ENCODE measurements at regions of chr9 and their contacts with region 1.

Region 1: GRCh38 chr9:114906908-114907571 is 23.4 kb downstream of the TNFSF8 start:
- DNase-seq: peak; percentile 49 to 78
- ATAC-seq: peak; percentile 57 to 78
- H3K4me3 ChIP-seq: no peak overlapping the region
- H3K27ac ChIP-seq: peak overlapping the region; percentile 80 to 81
- H3K4me1 ChIP-seq: peaks cover 54% of the 10 kb centered on the region
- CTCF ChIP-seq: peak; percentile 78
- EP300 ChIP-seq: no peak
- POLR2A ChIP-seq: no peak
- RAD21 ChIP-seq: peak; percentile 95 to 96

Region 2: GRCh38 chr9:114405294-114406034 is 501.6 kb before region 1 on chr9:
- CTCF ChIA-PET with region 1: interaction called, 55 read pairs
- POLR2A ChIA-PET with region 1: no interaction called
- DNase-seq: peak; percentile 78 to 90
- ATAC-seq: peak; percentile 87 to 98
- H3K4me3 ChIP-seq: no peak overlapping the region
- H3K27ac ChIP-seq: no peak overlapping the region
- H3K4me1 ChIP-seq: no peaks in the 10 kb centered on the region
- CTCF ChIP-seq: peak; percentile 84
- EP300 ChIP-seq: no peak
- POLR2A ChIP-seq: no peak
- RAD21 ChIP-seq: peak; percentile 93 to 95

Region 3: GRCh38 chr9:114662081-114662989 is 244.7 kb before region 1 on chr9:
- CTCF ChIA-PET with region 1: interaction called, 104 read pairs
- POLR2A ChIA-PET with region 1: interaction called, 4 read pairs
- DNase-seq: peak; percentile 33 to 92
- ATAC-seq: peak; percentile 86 to 97
- H3K4me3 ChIP-seq: no peak overlapping the region
- H3K27ac ChIP-seq: peak overlapping the region; percentile 10 to 40; a peak in 4 of 6 replicates
- H3K4me1 ChIP-seq: no peaks in the 10 kb centered on the region
- CTCF ChIP-seq: peak; percentile 88
- EP300 ChIP-seq: no peak
- POLR2A ChIP-seq: no peak
- RAD21 ChIP-seq: peak; percentile 94

Region 4: DNA sequence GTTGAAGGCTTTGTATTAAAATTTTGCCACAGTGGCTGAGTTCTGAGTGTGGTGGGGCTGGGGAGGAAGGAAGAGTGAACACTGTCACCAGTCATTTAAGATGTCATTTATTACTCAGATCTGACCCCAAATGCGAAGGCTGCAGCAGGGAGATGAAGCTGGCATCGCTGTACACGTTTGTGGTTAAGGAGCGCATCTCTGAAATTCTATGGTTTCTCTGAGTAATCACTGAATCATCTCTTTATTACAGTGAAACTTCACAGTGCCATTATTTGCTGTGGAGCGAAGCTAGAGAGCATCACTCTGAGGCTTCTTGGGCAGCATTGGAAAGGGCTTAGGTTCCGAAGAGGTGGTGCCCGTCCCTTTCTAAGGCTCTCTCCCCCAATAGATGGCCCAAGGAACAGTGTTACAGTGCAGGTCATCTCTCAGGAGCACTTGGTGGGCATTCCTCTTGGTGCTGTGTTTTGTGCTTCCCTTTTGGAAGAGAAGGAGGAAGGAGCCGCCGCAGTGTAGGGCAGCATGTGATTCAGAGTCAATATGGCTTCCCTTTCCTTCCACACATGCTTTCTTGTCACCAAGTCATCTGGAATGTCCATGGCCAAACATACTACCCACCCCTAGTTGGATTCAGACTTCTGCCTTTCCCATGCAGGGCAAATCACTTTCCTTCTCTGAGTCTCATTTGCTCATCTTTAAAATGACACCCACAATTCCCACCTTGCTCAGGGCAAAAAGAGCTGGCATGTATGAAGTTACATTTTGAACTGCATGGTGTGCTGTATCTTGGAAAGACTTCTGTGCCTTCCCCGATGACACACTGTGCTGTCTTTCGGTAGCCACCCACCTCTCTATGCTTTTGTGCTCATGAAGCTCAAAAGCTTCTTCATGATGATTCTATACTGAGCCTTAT is 215.7 kb before region 1 on chr9:
- CTCF ChIA-PET with region 1: interaction called, 28 read pairs
- POLR2A ChIA-PET with region 1: interaction called, 4 read pairs
- DNase-seq: peak; percentile 69 to 78
- ATAC-seq: peak; percentile 93 to 97
- H3K4me3 ChIP-seq: peak overlapping the region; percentile 6; the same call in 1 of the 3 replicates
- H3K27ac ChIP-seq: peak overlapping the region; percentile 74 to 82
- H3K4me1 ChIP-seq: peaks cover 31% of the 10 kb centered on the region
- CTCF ChIP-seq: no peak
- EP300 ChIP-seq: 0 out of 5 replicates have a peak, but pooled peaks of 1 of the 2 experiments have one; percentile 55
- POLR2A ChIP-seq: no peak
- RAD21 ChIP-seq: peak; percentile 16 to 25; a peak in 2 of 5 replicates

Region 5: DNA sequence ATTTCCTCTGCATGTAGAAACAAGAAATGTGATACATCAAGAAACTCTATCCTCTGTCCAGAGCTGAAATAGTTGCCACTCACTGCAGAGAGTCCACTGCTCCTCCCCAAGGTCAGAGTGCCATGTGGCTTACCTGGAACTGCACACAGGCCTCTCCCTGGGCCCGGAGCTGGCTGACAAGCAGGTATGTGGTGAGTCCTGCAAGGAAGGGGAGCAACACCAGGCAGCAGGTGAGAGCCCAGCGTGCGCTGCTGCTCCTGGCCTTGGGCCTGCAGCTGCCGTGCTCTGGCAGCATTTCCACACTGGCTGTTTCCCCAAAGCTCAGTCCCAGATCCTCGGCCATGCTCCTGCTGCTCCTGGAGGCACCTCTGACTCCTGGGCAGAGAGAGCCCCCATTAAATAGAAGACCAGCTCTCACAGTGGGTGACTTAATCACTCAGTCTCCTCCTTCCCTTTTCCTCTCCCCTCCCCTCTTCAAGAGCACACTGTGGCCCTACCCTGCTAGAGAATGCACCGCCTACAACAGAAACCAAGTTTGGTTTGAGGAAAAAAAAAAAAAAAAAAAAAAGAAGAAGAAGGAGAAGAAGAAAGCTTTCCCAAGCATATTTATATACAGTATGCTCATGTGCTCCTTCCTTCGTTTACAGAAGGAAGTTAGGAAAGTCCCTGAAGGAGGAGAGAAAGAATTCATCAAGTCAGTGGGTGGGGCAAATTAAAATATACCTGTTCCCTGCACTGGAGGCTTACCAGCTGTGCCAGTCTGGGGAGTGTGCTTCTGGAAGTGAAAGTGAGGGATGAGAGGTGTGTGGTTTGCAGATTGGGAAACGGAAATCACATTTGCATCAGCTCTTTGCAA is 101.1 kb before region 1 on chr9 and contains the start of gene TNFSF15:
- CTCF ChIA-PET with region 1: interaction called, 10 read pairs
- POLR2A ChIA-PET with region 1: no interaction called
- DNase-seq: peak in 1 of 2 experiments; percentile 40
- ATAC-seq: peak; percentile 57 to 70; a peak in 4 of 6 replicates
- H3K4me3 ChIP-seq: peak within 1 kb of the TSS; percentile 22; the same call in 1 of the 3 replicates
- H3K27ac ChIP-seq: peak within 1 kb of the TSS; percentile 66 to 85
- H3K4me1 ChIP-seq: peaks cover 49% of the 10 kb centered on the region
- CTCF ChIP-seq: no peak
- EP300 ChIP-seq: no peak
- POLR2A ChIP-seq: peak; percentile 13; the same call in 1 of the 2 replicates
- RAD21 ChIP-seq: no peak
- polyA plus RNA-seq, gene TNFSF15: 5.6 and 6.8 TPM in 2 replicates

Region 6: GRCh38 chr9:114919611-114920010 is 12.6 kb after region 1 on chr9:
- CTCF ChIA-PET with region 1: interaction called, 23 read pairs
- POLR2A ChIA-PET with region 1: no interaction called
- DNase-seq: no peak
- ATAC-seq: no peak
- H3K4me3 ChIP-seq: no peak overlapping the region
- H3K27ac ChIP-seq: no peak overlapping the region
- H3K4me1 ChIP-seq: no peaks in the 10 kb centered on the region
- CTCF ChIP-seq: no peak
- EP300 ChIP-seq: no peak
- POLR2A ChIP-seq: no peak
- RAD21 ChIP-seq: no peak

Region 7: DNA sequence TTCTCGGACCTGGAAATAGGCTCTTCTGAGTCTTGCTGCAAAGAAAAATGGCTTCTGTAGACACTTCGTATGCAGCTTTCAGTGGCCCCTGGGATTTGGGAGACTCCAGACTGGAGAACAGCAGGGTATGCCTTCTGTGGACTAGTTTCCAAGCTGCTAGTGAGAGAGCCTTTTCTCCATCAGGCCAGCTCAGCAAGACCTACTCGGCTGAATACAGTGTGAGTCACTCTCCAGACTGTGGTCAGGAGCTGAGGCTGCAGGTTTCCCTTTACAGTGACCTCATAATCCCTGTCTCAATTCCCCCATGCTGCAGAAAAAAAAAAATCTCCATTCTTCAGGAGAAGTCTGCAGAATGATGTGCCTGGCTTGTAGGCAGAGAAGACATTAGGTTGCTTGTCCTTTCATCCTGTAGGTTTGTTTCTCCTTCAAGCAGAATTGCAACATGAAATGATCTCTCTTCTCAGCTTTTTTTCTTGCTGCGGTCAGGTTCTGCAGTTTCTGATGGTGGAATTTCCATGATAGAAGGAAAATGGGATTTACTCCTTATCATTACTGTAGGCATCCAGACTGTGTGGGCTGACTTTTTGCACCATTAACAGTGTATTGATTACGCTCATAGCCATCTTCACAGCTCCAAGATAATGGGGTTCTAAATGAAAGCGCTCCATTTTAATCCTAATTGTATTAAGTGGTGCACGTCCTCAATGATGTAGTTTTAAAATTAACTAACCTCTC is 101.7 kb after region 1 on chr9:
- CTCF ChIA-PET with region 1: interaction called, 20 read pairs
- POLR2A ChIA-PET with region 1: no interaction called
- DNase-seq: peak; percentile 33 to 51
- ATAC-seq: peak; percentile 95 to 96
- H3K4me3 ChIP-seq: no peak overlapping the region
- H3K27ac ChIP-seq: peak overlapping the region in 1 of 2 experiments; percentile 34; a peak in 1 of 6 replicates
- H3K4me1 ChIP-seq: peaks cover 9% of the 10 kb centered on the region; the same call in 1 of the 3 replicates
- CTCF ChIP-seq: no peak
- EP300 ChIP-seq: no peak
- POLR2A ChIP-seq: no peak
- RAD21 ChIP-seq: 0 out of 5 replicates have a peak, but pooled peaks of 1 of the 2 experiments have one; percentile 14

Measured in A549 (cell line).